ENCODE measurements at regions of chr6 and their contacts with region 1.

Region 1: GRCh38 chr6:15531973-15532372 is 130.9 kb downstream of the DTNBP1 start:
- DNase-seq: no peak
- ATAC-seq: no peak
- H3K4me3 ChIP-seq: no peak overlapping the region
- H3K4me3 Mint-ChIP-seq: no peak overlapping the region
- H3K27ac ChIP-seq: no peak overlapping the region
- H3K27ac Mint-ChIP-seq: no peak overlapping the region
- H3K4me1 ChIP-seq: no peaks in the 10 kb centered on the region
- H3K4me1 Mint-ChIP-seq: peaks cover 21% of the 10 kb centered on the region
- H3K27me3 ChIP-seq: no peaks in the 10 kb centered on the region
- H3K27me3 Mint-ChIP-seq: no peaks in the 10 kb centered on the region
- CTCF ChIP-seq: no peak

Region 2: GRCh38 chr6:15207923-15208322 is 324.1 kb before region 1 on chr6:
- CTCF ChIA-PET with region 1: no interaction called
- POLR2A ChIA-PET with region 1: no interaction called
- intact Hi-C with region 1: no loop called
- DNase-seq: no peak
- ATAC-seq: no peak
- H3K4me3 ChIP-seq: no peak overlapping the region
- H3K4me3 Mint-ChIP-seq: no peak overlapping the region
- H3K27ac ChIP-seq: no peak overlapping the region
- H3K27ac Mint-ChIP-seq: no peak overlapping the region
- H3K4me1 ChIP-seq: no peaks in the 10 kb centered on the region
- H3K4me1 Mint-ChIP-seq: peaks cover 7% of the 10 kb centered on the region
- H3K27me3 ChIP-seq: no peaks in the 10 kb centered on the region
- H3K27me3 Mint-ChIP-seq: no peaks in the 10 kb centered on the region
- CTCF ChIP-seq: no peak

Region 3: DNA sequence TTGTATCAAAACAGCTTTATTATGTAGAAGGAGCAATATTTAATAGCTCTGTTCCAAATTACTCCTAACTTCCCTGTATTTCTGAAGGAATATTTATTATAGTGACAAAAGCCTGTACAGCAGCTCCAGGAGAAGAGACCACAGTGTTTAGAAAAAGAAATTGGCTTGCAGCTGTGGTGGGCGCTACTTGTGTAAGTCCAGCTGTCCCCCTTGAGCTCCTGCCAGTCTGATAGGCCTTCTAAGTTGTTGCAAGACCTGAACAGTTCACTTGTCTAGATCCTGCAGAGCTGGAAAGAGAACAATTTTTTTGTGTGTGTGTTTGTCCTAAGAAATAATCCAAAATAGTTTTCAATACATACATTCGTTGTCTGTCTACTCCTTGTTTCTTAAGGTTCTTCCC is 199.5 kb before region 1 on chr6:
- CTCF ChIA-PET with region 1: no interaction called
- POLR2A ChIA-PET with region 1: interaction called, 10 read pairs
- intact Hi-C with region 1: no loop called
- DNase-seq: no peak
- ATAC-seq: no peak
- H3K4me3 ChIP-seq: no peak overlapping the region
- H3K4me3 Mint-ChIP-seq: no peak overlapping the region
- H3K27ac ChIP-seq: no peak overlapping the region
- H3K27ac Mint-ChIP-seq: no peak overlapping the region
- H3K4me1 ChIP-seq: peaks cover 66 to 74% of the 10 kb centered on the region in 2 donors
- H3K4me1 Mint-ChIP-seq: peaks cover 91% of the 10 kb centered on the region
- H3K27me3 ChIP-seq: no peaks in the 10 kb centered on the region
- H3K27me3 Mint-ChIP-seq: no peaks in the 10 kb centered on the region
- CTCF ChIP-seq: no peak

Region 4: DNA sequence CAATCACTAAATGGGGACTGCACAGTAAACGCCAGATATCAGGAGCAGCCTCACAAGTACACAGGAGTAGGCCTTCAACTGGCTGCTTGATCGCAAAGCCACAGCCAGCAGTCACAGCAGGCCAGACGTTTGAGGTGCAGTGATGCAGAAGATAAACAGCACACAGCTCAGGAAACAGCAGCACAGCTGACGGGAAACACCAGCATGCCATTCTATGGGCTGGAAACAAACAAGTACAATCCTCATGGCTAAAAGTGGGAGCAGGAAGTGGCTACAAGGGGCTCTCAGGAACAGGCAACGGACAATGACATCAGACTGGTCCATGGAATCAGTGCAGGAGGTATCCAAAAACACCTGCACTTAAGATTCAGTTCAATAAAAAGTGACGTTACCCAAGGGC is 19.8 kb after region 1 on chr6:
- CTCF ChIA-PET with region 1: no interaction called
- POLR2A ChIA-PET with region 1: no interaction called
- intact Hi-C with region 1: no loop called
- DNase-seq: peak; percentile 51
- ATAC-seq: peak; percentile 84
- H3K4me3 ChIP-seq: no peak overlapping the region
- H3K4me3 Mint-ChIP-seq: peak overlapping the region; percentile 50
- H3K27ac ChIP-seq: peak overlapping the region; percentile 1 to 62
- H3K27ac Mint-ChIP-seq: peak overlapping the region; percentile 78
- H3K4me1 ChIP-seq: peaks cover 26 to 35% of the 10 kb centered on the region in 2 donors
- H3K4me1 Mint-ChIP-seq: peaks cover 62% of the 10 kb centered on the region
- H3K27me3 ChIP-seq: no peaks in the 10 kb centered on the region
- H3K27me3 Mint-ChIP-seq: no peaks in the 10 kb centered on the region
- CTCF ChIP-seq: no peak

Measured in B cell (primary cell).